WTC11 (cell line): ENCODE measurements at regions of chr16 and their contacts with region 1.

Region 1: GRCh38 chr16:22321339-22322001 is 24.3 kb downstream of the POLR3E start:
- DNase-seq: peak; percentile 79
- ATAC-seq: peak; percentile 80
- H3K4me3 Mint-ChIP-seq: no peak overlapping the region
- H3K27ac Mint-ChIP-seq: peak overlapping the region; percentile 74
- H3K4me1 Mint-ChIP-seq: no peaks in the 10 kb centered on the region
- H3K27me3 Mint-ChIP-seq: no peaks in the 10 kb centered on the region
- CTCF ChIP-seq: peak; percentile 83

Region 2: GRCh38 chr16:22161999-22162655 is 159.3 kb before region 1 on chr16 and contains the start of gene SDR42E2:
- CTCF ChIA-PET with region 1: no interaction called
- POLR2A ChIA-PET with region 1: no interaction called
- DNase-seq: peak; percentile 80
- ATAC-seq: peak; percentile 95
- H3K4me3 Mint-ChIP-seq: peak within 1 kb of the TSS; percentile 71
- H3K27ac Mint-ChIP-seq: no peak within 1 kb of the TSS
- H3K4me1 Mint-ChIP-seq: no peaks in the 10 kb centered on the region
- H3K27me3 Mint-ChIP-seq: peaks cover 53% of the 10 kb centered on the region
- CTCF ChIP-seq: no peak
- total RNA-seq, gene SDR42E2: 0.09 to 0.18 TPM (median 0.13 TPM) in 3 replicates

Region 3: DNA sequence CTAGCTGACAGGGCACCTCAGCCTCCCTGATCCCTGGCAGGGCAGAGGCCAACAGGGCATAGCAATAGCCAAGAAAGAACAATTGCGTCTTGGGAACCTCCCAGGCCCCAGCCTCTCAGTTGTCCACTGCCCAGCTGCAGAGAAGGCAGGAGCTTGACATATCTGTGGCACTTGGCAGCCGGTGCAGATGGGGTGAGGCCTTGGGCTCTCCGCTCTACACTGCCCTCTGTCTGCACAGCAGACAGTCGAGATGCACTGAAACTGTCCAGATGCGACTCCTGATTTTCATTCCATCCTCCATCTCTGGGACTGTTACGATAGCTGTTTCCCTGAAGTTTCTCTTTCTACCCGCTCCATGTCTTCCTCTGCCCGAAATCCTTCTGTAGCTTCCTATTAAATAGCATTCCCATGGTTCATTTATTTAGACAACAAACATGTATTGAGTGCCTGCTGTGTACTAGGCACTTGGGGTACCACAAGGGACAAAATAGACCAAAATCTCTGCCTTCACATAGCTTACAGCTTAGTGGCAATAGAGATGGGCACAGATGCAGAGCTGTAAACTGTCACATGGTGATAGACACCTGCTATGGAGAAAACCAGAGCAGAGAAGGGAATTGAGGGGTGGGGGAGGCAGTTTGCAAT is 20.9 kb before region 1 on chr16:
- CTCF ChIA-PET with region 1: interaction called, 19 read pairs
- POLR2A ChIA-PET with region 1: no interaction called
- DNase-seq: peak; percentile 57
- ATAC-seq: peak; percentile 14
- H3K4me3 Mint-ChIP-seq: peak overlapping the region; percentile 26; the same call in 1 of the 2 replicates
- H3K27ac Mint-ChIP-seq: peak overlapping the region; percentile 76
- H3K4me1 Mint-ChIP-seq: peaks cover 26% of the 10 kb centered on the region
- H3K27me3 Mint-ChIP-seq: no peaks in the 10 kb centered on the region
- CTCF ChIP-seq: peak; percentile 31; the same call in 1 of the 2 replicates